B cell (primary cell): ENCODE measurements at regions of chr7 and their contacts with region 1.

Region 1: GRCh38 chr7:48088559-48089045 is 463 bp upstream of the UPP1 start:
- DNase-seq: no peak
- ATAC-seq: no peak
- H3K4me3 ChIP-seq: peak overlapping the region; percentile 53 to 81 (median 73)
- H3K4me3 Mint-ChIP-seq: peak overlapping the region; percentile 94
- H3K27ac ChIP-seq: peak overlapping the region; percentile 56 to 73
- H3K27ac Mint-ChIP-seq: peak overlapping the region; percentile 82
- H3K4me1 ChIP-seq: peaks cover 15 to 40% of the 10 kb centered on the region in 2 donors
- H3K4me1 Mint-ChIP-seq: peaks cover 43% of the 10 kb centered on the region
- H3K27me3 ChIP-seq: no peaks in the 10 kb centered on the region
- H3K27me3 Mint-ChIP-seq: no peaks in the 10 kb centered on the region
- CTCF ChIP-seq: no peak

Region 2: DNA sequence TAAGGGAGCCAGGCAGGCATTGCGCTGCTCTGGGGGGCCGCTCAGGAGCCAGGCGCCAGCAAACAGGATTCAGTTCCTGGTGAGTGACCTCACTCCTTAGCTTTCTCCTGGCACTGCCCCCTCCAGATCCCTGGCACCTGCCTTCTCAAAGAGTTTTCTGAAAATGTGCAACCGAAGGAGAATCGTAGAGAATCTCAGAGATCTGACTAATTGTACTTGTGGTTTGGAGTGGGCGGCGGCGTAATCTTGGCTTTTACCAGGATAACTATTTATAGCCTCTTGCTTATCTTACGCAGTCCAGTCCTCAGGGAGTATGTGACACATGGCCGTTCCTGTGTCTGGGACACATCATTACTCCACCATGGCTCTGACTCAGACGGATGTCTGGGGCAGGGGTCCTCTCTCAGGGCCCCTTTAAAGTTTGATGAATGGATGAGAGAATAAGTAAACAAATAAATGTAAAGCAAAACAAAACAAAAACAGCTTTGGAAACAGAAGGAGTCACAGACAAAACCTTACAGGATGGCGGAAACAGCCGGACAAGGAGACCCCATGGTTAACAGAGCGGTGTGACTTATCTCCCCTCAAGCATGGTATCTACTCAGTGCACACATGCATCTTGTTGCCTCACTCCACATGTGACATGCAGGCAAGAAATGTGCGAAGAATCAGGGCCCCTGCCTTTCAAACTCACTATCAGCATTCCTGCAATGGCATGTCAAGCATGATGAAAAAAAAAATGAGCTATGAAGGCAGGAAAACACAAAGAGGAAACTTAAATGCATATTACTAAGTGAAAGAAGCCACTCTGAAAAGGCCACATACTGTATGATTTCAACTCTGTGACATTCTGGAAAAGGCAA is 606.4 kb before region 1 on chr7:
- CTCF ChIA-PET with region 1: no interaction called
- POLR2A ChIA-PET with region 1: no interaction called
- intact Hi-C with region 1: loop called (anchors 5 kb)
- DNase-seq: no peak
- ATAC-seq: peak; percentile 60
- H3K4me3 ChIP-seq: no peak overlapping the region
- H3K4me3 Mint-ChIP-seq: peak overlapping the region; percentile 72
- H3K27ac ChIP-seq: no peak overlapping the region
- H3K27ac Mint-ChIP-seq: peak overlapping the region; percentile 87
- H3K4me1 ChIP-seq: peaks cover 39 to 44% of the 10 kb centered on the region in 2 donors
- H3K4me1 Mint-ChIP-seq: peaks cover 64% of the 10 kb centered on the region
- H3K27me3 ChIP-seq: no peaks in the 10 kb centered on the region
- H3K27me3 Mint-ChIP-seq: no peaks in the 10 kb centered on the region
- CTCF ChIP-seq: no peak

Region 3: DNA sequence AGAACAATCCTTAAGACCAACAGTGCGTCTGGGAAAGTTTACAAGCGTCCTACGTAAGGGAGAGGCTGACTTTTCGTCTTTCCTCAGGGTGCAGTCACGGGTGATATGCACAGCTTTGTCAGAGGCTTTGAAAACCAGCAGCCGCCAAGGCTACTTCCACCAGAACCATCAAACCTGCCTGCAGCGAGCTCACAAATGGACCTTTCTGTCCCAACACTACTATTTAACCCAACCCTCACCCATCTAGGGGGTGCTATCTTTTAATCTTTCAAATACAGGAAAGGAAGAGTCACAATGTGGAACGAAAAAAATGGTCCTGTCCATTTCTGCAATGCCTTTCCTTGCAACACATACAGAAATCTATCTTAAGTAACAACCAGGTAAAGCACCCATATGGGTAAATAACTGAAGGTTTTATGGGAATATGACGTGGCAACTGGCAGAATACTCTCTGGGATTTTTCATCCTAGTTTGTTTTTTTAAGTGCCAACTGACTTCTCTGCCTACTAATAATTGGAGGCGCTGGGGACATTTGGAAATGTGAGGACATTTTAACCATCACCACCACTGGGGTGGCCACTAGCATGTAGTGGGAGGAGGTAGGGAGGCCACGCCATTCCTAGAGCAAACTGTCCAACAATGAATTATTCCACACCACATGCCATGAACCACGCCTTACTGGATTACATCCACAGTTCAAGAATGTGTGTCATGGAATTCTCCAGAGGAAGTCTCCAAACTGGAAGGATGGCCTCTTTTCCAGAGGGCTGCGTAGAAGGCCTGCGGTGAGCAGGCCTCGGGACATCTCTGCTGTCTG is 531.2 kb before region 1 on chr7:
- CTCF ChIA-PET with region 1: no interaction called
- POLR2A ChIA-PET with region 1: no interaction called
- intact Hi-C with region 1: no loop called
- DNase-seq: no peak
- ATAC-seq: no peak
- H3K4me3 ChIP-seq: no peak overlapping the region
- H3K4me3 Mint-ChIP-seq: no peak overlapping the region
- H3K27ac ChIP-seq: no peak overlapping the region
- H3K27ac Mint-ChIP-seq: no peak overlapping the region
- H3K4me1 ChIP-seq: peaks cover 10 to 13% of the 10 kb centered on the region in 2 donors
- H3K4me1 Mint-ChIP-seq: peaks cover 21% of the 10 kb centered on the region
- H3K27me3 ChIP-seq: no peaks in the 10 kb centered on the region
- H3K27me3 Mint-ChIP-seq: no peaks in the 10 kb centered on the region
- CTCF ChIP-seq: no peak

Region 4: GRCh38 chr7:47914717-47915615 is 173.6 kb before region 1 on chr7:
- CTCF ChIA-PET with region 1: no interaction called
- POLR2A ChIA-PET with region 1: no interaction called
- intact Hi-C with region 1: no loop called
- DNase-seq: no peak
- ATAC-seq: no peak
- H3K4me3 ChIP-seq: no peak overlapping the region
- H3K4me3 Mint-ChIP-seq: no peak overlapping the region
- H3K27ac ChIP-seq: no peak overlapping the region
- H3K27ac Mint-ChIP-seq: no peak overlapping the region
- H3K4me1 ChIP-seq: no peaks in the 10 kb centered on the region
- H3K4me1 Mint-ChIP-seq: no peaks in the 10 kb centered on the region
- H3K27me3 ChIP-seq: no peaks in the 10 kb centered on the region
- H3K27me3 Mint-ChIP-seq: peaks cover 7% of the 10 kb centered on the region
- CTCF ChIP-seq: no peak

Region 5: DNA sequence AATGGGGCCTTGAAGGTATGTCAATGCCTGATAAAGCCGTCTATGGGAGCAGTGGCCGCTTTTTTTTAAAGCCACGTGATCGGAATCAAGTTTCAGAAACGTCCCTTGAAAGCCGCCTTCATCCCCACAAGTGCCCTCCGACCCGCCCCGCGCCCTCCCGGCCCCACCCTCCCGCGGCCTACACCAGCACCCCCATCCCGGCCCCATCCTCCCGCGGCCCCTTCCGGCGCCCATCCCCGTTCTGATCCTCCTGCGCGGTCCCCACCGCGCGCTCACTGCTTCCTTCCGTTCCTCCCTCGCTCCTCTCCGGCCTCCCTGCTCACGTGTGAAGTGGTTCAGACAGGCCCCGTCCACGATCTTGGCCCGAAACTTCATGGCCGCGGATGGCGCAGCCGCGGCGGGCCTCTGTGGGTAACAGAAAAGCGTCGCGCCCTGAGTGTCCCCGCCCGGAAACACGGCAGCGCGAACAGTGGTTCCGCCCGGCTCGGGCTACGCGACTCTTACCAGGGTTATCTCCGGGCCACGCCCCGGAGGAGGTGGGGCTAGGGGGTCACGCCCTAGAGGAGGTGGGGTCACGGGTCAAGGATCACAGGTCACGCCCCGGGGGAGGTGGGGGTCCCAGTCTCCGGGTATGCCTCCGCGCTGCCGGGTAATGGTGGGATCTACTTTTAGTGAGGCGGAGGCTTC is 109.3 kb before region 1 on chr7 and contains the start of gene HUS1:
- CTCF ChIA-PET with region 1: interaction called, 3 read pairs
- POLR2A ChIA-PET with region 1: interaction called, 3 read pairs
- intact Hi-C with region 1: loop called (anchors 1 kb)
- DNase-seq: peak; percentile 94
- ATAC-seq: peak; percentile 98
- H3K4me3 ChIP-seq: peak within 1 kb of the TSS; percentile 67 to 91 (median 71)
- H3K4me3 Mint-ChIP-seq: peak within 1 kb of the TSS; percentile 92
- H3K27ac ChIP-seq: peak within 1 kb of the TSS; percentile 91 to 93
- H3K27ac Mint-ChIP-seq: peak within 1 kb of the TSS; percentile 98
- H3K4me1 ChIP-seq: peaks cover 8 to 13% of the 10 kb centered on the region in 2 donors
- H3K4me1 Mint-ChIP-seq: peaks cover 22% of the 10 kb centered on the region
- H3K27me3 ChIP-seq: no peaks in the 10 kb centered on the region
- H3K27me3 Mint-ChIP-seq: no peaks in the 10 kb centered on the region
- CTCF ChIP-seq: no peak
- total RNA-seq, gene HUS1: 61.6 and 70.8 TPM in 2 replicates

Region 6: DNA sequence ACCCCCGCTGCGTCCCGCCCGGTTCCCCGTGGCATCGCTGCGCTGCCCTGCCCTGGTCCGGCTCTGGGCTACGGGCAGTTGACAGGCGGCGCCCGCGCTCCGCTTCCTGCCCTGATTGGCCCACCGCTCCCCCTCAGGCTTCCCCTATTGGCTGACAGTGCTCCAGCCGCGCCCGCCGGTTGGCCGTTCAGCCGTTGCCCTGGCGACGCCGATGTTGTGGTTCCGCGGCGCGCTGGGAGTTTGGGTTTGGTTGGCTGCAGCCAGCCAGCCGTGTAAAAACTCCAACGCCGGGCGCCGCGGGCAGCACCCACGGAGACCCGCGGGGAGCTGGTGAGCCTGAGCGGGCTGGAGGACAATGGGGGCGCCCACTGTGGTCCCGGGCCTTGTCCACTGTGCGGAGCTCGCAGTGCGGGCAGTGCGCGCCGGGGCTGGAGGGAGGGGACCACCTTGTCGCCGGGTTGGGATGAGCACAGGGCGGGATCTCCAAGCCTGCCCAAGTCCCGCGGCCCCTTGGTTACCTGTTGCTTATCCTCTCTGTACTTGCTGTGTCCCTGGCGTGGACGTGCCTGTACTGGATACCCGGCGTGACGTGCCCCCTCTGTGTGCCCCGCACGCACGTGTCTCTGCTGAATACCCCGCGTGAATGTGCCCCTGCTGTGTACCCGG is 53.2 kb before region 1 on chr7 and contains the start of gene C7orf57:
- CTCF ChIA-PET with region 1: no interaction called
- POLR2A ChIA-PET with region 1: no interaction called
- intact Hi-C with region 1: loop called (anchors 1 kb)
- DNase-seq: peak; percentile 81
- ATAC-seq: peak; percentile 96
- H3K4me3 ChIP-seq: peak within 1 kb of the TSS; percentile 33 to 61 (median 44)
- H3K4me3 Mint-ChIP-seq: peak within 1 kb of the TSS; percentile 89
- H3K27ac ChIP-seq: no peak within 1 kb of the TSS
- H3K27ac Mint-ChIP-seq: peak within 1 kb of the TSS; percentile 8
- H3K4me1 ChIP-seq: peaks cover 14 to 15% of the 10 kb centered on the region in 2 donors
- H3K4me1 Mint-ChIP-seq: peaks cover 17% of the 10 kb centered on the region
- H3K27me3 ChIP-seq: peaks cover 0 to 40% (median 23%) of the 10 kb centered on the region in 4 experiments
- H3K27me3 Mint-ChIP-seq: peaks cover 38% of the 10 kb centered on the region
- CTCF ChIP-seq: no peak
- total RNA-seq, gene C7orf57: not detected in 2 replicates

Region 7: GRCh38 chr7:48251766-48252165 is 163.2 kb after region 1 on chr7:
- CTCF ChIA-PET with region 1: no interaction called
- POLR2A ChIA-PET with region 1: no interaction called
- intact Hi-C with region 1: no loop called
- DNase-seq: no peak
- ATAC-seq: no peak
- H3K4me3 ChIP-seq: no peak overlapping the region
- H3K4me3 Mint-ChIP-seq: no peak overlapping the region
- H3K27ac ChIP-seq: no peak overlapping the region
- H3K27ac Mint-ChIP-seq: no peak overlapping the region
- H3K4me1 ChIP-seq: no peaks in the 10 kb centered on the region
- H3K4me1 Mint-ChIP-seq: no peaks in the 10 kb centered on the region
- H3K27me3 ChIP-seq: no peaks in the 10 kb centered on the region
- H3K27me3 Mint-ChIP-seq: peaks cover 3% of the 10 kb centered on the region
- CTCF ChIP-seq: no peak